PC-9 (cell line): ENCODE measurements at regions of chr1 and their contacts with region 1.

Region 1: GRCh38 chr1:222465211-222466041 is 82.5 kb downstream of the HHIPL2 start:
- DNase-seq: peak; percentile 87 to 96
- H3K4me3 ChIP-seq: peak overlapping the region; percentile 60
- H3K27ac ChIP-seq: peak overlapping the region; percentile 96
- H3K4me1 ChIP-seq: peaks cover 9% of the 10 kb centered on the region
- H3K27me3 ChIP-seq: no peaks in the 10 kb centered on the region
- CTCF ChIP-seq: peak; percentile 97

Region 2: GRCh38 chr1:221778535-221779142 is 686.8 kb before region 1 on chr1:
- CTCF ChIA-PET with region 1: no interaction called
- POLR2A ChIA-PET with region 1: no interaction called
- intact Hi-C with region 1: no loop called
- DNase-seq: no peak
- H3K4me3 ChIP-seq: no peak overlapping the region
- H3K27ac ChIP-seq: no peak overlapping the region
- H3K4me1 ChIP-seq: no peaks in the 10 kb centered on the region
- H3K27me3 ChIP-seq: no peaks in the 10 kb centered on the region
- CTCF ChIP-seq: no peak

Region 3: DNA sequence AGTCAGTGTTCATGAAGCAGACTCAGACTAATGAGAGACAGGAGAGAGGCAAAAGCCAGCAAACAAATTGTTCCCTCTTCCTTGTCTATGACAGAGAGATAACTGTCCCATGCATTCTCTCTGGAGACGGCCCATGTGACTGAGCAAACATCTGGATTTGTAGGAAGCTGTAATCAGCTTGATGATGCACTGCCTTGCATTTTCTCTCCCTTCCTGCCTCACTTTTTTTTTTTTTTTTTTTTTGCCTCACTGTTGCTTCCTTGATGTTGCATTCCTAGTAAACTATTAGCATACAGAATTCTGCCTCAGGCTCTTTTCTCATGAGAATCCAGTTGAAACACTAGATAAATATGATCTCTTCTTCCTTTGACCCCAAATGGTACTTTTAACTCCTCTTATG is 52.0 kb before region 1 on chr1:
- CTCF ChIA-PET with region 1: no interaction called
- POLR2A ChIA-PET with region 1: no interaction called
- intact Hi-C with region 1: no loop called
- DNase-seq: peak in 1 of 2 experiments; percentile 39
- H3K4me3 ChIP-seq: no peak overlapping the region
- H3K27ac ChIP-seq: no peak overlapping the region
- H3K4me1 ChIP-seq: no peaks in the 10 kb centered on the region
- H3K27me3 ChIP-seq: 0 out of 2 replicates have a peak, but pooled peaks cover 5% of the 10 kb centered on the region
- CTCF ChIP-seq: no peak

Region 4: GRCh38 chr1:222617367-222617951 is 152.0 kb after region 1 on chr1:
- CTCF ChIA-PET with region 1: no interaction called
- POLR2A ChIA-PET with region 1: interaction called, 3 read pairs
- intact Hi-C with region 1: loop called (anchors 1 kb)
- DNase-seq: peak; percentile 88 to 90
- H3K4me3 ChIP-seq: peak overlapping the region; percentile 43; the same call in 1 of the 2 replicates
- H3K27ac ChIP-seq: 0 out of 2 replicates have a peak overlapping the region, but pooled peaks have one; percentile 14
- H3K4me1 ChIP-seq: peaks cover 6% of the 10 kb centered on the region
- H3K27me3 ChIP-seq: no peaks in the 10 kb centered on the region
- CTCF ChIP-seq: no peak

Region 5: GRCh38 chr1:222634180-222635013 is 169.0 kb after region 1 on chr1:
- CTCF ChIA-PET with region 1: interaction called, 24 read pairs
- POLR2A ChIA-PET with region 1: no interaction called
- intact Hi-C with region 1: loop called (anchors 1 kb)
- DNase-seq: peak; percentile 63 to 78
- H3K4me3 ChIP-seq: no peak overlapping the region
- H3K27ac ChIP-seq: no peak overlapping the region
- H3K4me1 ChIP-seq: no peaks in the 10 kb centered on the region
- H3K27me3 ChIP-seq: no peaks in the 10 kb centered on the region
- CTCF ChIP-seq: peak; percentile 94

Region 6: DNA sequence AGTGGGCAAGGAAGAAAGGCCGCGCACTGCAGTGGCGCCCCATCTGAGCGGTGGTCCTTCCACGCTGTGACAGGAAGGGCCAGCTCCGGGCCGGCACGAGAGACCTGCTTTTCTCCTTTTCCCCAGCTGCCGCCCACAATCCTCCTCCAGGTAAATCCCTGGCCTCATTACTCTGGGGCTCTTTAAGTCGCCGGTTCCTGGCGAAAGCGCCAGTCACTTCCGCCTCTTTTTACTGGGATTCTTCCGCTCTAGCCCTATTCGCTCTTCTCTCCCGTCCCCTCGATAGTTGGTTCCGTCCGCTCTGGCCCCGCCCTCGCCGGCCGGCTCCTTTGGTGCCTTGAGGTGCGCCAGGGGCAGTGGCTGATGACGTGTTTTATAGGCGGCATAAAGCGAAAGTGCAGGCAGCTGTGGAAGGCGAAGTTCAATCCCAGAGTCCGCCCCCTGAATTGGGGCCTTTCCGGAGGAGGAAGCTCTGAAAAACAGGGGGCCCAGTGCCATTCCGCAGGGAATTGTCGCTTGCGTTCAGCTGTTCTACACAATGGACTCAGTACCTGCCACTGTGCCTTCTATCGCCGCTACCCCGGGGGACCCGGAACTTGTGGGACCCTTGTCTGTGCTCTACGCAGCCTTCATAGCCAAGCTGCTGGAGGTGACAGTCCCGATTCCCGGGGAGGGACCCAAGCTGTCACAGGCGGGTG is 178.7 kb after region 1 on chr1:
- CTCF ChIA-PET with region 1: no interaction called
- POLR2A ChIA-PET with region 1: no interaction called
- intact Hi-C with region 1: loop called (anchors 1 kb)
- DNase-seq: peak; percentile 97 to 99
- H3K4me3 ChIP-seq: peak overlapping the region; percentile 94
- H3K27ac ChIP-seq: peak overlapping the region; percentile 83
- H3K4me1 ChIP-seq: peaks cover 15% of the 10 kb centered on the region
- H3K27me3 ChIP-seq: no peaks in the 10 kb centered on the region
- CTCF ChIP-seq: no peak

Region 7: DNA sequence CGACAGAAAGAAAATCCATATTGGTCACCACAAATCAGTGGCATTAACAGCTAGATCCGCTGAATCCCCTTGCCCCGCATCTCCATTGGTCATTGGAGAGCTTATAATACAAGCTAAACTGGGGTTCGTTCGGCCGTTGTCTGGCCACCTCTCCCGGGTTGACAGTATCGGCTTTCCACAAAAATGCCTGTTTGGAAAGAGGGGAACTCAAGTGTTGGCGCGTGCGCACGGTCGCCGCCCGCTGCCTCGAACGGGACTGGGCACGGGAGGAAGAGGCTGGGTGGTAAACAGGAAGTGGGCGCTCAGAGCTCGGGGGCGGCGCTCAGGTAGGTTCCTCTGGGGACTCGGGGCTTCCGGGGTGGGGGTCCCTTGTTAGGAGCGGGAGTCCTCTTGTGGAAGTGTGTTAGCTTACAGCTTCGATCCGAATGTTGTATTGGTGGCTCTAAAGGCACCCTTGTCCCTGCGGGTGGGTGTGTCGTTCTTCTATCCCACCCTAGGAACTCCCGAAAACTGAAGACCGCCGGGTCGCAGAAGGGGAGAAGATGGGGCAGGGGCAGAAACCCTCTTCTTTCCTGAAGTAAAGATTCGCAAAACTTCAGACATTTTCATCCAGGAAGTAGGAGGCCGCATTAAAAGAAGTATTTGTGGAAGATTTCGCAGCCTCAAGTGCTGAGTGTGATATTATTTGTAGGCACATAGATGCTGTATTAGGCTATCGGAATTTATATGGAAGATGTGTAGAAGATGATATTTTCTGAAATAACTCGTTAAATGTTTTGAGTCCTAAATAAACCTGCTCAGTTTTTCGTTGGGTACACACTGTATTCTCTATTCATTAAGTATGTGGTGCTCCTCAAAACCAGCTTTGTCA is 247.9 kb after region 1 on chr1:
- CTCF ChIA-PET with region 1: no interaction called
- POLR2A ChIA-PET with region 1: interaction called, 4 read pairs
- intact Hi-C with region 1: loop called (anchors 1 kb)
- DNase-seq: peak; percentile 84 to 93
- H3K4me3 ChIP-seq: peak overlapping the region; percentile 89
- H3K27ac ChIP-seq: peak overlapping the region; percentile 87
- H3K4me1 ChIP-seq: peaks cover 15% of the 10 kb centered on the region
- H3K27me3 ChIP-seq: no peaks in the 10 kb centered on the region
- CTCF ChIP-seq: no peak

Region 8: GRCh38 chr1:222792744-222793143 is 327.3 kb after region 1 on chr1:
- CTCF ChIA-PET with region 1: no interaction called
- POLR2A ChIA-PET with region 1: no interaction called
- intact Hi-C with region 1: loop called (anchors 2 kb)
- DNase-seq: no peak
- H3K4me3 ChIP-seq: no peak overlapping the region
- H3K27ac ChIP-seq: no peak overlapping the region
- H3K4me1 ChIP-seq: no peaks in the 10 kb centered on the region
- H3K27me3 ChIP-seq: peaks cover 25% of the 10 kb centered on the region; the same call in 1 of the 2 replicates
- CTCF ChIP-seq: peak; percentile 76

Region 9: DNA sequence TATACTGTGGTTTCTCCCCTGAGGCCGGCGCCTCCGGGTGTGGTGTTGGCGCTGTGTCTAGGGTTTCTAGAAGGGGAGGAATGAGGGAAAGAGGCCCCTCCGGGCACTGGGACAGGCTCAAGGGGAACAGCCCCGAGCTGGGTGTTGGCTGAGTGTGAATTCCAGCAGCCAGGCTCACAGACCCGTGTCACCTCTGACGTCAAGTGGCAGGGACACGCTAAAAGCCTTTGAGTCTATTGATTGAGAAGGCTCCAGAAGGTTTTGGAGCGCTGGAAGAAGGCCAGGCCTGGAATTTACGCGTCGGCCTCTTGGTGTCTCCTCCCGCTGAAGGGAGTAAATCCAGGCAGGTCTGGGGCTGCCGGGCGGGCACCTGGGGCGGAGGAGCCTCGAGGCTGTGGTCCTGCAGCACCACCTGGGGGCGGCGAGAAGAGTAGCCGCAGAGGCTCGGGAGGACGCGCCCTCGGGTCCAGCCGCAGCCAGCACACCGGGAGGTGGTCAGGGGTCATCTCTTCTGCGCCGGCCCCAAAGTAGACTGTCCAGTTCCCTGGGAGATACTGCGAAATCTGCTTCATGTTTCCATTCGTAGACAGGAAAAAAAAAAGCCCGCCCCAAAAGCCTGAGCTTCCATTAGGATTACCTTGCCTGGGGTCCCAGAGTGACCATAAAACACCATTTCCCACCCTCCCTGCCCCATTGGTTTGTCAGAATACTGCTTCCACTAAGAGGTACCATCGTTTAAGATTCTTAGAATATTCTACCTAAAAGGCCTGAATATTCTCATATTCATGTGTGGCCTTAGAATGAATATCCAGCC is 616.0 kb after region 1 on chr1:
- CTCF ChIA-PET with region 1: no interaction called
- POLR2A ChIA-PET with region 1: no interaction called
- intact Hi-C with region 1: loop called (anchors 1 kb)
- DNase-seq: peak; percentile 95 to 97
- H3K4me3 ChIP-seq: peak overlapping the region; percentile 27; the same call in 1 of the 2 replicates
- H3K27ac ChIP-seq: no peak overlapping the region
- H3K4me1 ChIP-seq: no peaks in the 10 kb centered on the region
- H3K27me3 ChIP-seq: peaks cover 13% of the 10 kb centered on the region
- CTCF ChIP-seq: peak; percentile 93